Endothelial cell of umbilical vein (primary cell): ENCODE measurements at regions of chr12 and their contacts with region 1.

Region 1: DNA sequence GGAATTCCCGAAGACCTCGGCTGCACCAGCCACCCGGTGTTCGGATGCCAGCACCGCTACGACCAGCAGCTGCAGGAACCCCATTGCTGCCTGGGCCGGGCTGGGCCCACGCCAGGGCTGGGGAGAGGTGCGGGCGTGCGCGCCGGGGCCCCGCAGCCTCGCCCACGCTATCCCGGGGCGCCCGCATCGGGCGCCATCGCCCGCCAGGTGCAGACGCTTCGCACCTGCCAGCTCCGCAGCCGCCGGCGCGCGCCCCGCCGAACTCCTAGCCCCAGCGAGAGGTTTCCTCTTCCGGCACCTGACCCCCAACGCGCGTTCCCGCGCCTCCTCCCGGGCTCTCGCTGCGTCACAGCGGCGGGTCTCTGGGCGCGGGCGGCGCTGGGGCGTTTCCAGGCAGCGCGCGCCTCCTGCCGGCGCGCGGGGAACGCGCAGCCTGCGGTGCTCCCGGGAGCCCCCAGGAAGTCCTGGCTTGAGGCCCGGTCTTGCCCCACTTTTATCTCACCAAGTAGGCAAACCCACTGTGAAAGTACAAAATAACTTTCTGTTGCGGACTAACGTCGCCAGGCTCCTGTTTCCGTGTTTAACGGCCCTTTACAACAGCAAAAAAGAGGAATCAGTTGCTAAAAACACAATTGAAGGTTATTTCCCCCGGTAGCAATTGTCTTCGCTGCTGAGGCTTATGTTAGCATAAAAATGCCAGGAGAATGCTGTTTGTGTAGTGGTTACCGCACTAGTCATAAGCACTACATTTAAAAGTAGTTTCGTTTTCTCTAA is at the start of gene TM7SF3:
- DNase-seq: peak; percentile 83
- H3K4me3 ChIP-seq: peak within 1 kb of the TSS; percentile 48 to 89 (median 65)
- H3K27ac ChIP-seq: peak within 1 kb of the TSS; percentile 81
- H3K4me1 ChIP-seq: peaks cover 11% of the 10 kb centered on the region
- H3K27me3 ChIP-seq: no peaks in the 10 kb centered on the region
- CTCF ChIP-seq: peak; percentile 87 to 99
- POLR2A ChIP-seq: peak; percentile 55
- total RNA-seq, gene TM7SF3: 51.0 and 54.8 TPM in 2 replicates

Region 2: DNA sequence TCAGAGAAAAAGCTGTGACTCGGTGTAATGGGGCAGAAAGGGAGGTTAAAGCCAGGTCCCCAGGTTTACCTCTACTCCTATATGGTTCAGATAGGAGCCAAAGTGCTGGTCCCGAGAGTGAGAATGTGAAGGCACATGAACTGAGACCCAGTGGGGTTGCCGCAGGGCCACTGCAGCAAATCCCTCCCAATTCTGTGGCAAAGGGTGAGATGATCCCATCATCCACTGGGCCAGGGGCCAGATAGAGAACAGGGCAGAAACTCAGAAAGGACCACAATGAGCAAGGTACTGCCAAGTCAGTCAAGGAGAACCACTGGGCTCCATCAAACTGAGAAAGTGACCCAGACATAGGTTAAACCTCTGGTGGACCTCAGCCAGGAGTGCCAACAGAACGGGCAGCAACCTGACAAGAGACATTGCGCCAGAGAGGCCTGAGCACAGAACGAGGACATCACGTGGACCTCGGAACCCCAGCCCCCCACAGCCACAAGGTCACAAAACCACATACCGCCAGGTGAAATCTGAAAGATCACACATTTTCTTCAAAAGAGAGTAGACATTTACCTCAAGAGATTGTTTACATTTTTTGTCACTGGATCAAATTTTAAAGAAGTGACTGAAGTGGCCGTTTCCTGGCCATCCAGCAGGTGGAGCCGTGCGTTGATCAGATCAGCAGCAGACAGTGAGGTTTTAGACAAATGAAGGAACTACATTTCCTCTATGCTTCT is 160.8 kb before region 1 on chr12:
- CTCF ChIA-PET with region 1: interaction called, 5 read pairs
- POLR2A ChIA-PET with region 1: no interaction called
- dilution Hi-C with region 1: no loop called
- intact Hi-C with region 1: loop called (anchors 1 kb)
- DNase-seq: peak; percentile 74
- H3K4me3 ChIP-seq: no peak overlapping the region
- H3K27ac ChIP-seq: no peak overlapping the region
- H3K4me1 ChIP-seq: peaks cover 32% of the 10 kb centered on the region
- H3K27me3 ChIP-seq: no peaks in the 10 kb centered on the region
- CTCF ChIP-seq: peak; percentile 77 to 94
- POLR2A ChIP-seq: no peak

Region 3: GRCh38 chr12:26937875-26938700 is 76.2 kb before region 1 on chr12 and contains the starts of genes FGFR1OP2 and INTS13:
- CTCF ChIA-PET with region 1: interaction called, 4 read pairs
- POLR2A ChIA-PET with region 1: no interaction called
- dilution Hi-C with region 1: no loop called
- intact Hi-C with region 1: loop called (anchors 1 kb)
- DNase-seq: peak; percentile 98
- H3K4me3 ChIP-seq: peak within 1 kb of the TSS; percentile 49 to 94 (median 91)
- H3K27ac ChIP-seq: peak within 1 kb of the TSS; percentile 82
- H3K4me1 ChIP-seq: peaks cover 49% of the 10 kb centered on the region
- H3K27me3 ChIP-seq: no peaks in the 10 kb centered on the region
- CTCF ChIP-seq: no peak
- POLR2A ChIP-seq: peak; percentile 90
- total RNA-seq, gene FGFR1OP2: 47.3 and 49.3 TPM in 2 replicates
- total RNA-seq, gene INTS13: 25.5 and 35.9 TPM in 2 replicates

Region 4: DNA sequence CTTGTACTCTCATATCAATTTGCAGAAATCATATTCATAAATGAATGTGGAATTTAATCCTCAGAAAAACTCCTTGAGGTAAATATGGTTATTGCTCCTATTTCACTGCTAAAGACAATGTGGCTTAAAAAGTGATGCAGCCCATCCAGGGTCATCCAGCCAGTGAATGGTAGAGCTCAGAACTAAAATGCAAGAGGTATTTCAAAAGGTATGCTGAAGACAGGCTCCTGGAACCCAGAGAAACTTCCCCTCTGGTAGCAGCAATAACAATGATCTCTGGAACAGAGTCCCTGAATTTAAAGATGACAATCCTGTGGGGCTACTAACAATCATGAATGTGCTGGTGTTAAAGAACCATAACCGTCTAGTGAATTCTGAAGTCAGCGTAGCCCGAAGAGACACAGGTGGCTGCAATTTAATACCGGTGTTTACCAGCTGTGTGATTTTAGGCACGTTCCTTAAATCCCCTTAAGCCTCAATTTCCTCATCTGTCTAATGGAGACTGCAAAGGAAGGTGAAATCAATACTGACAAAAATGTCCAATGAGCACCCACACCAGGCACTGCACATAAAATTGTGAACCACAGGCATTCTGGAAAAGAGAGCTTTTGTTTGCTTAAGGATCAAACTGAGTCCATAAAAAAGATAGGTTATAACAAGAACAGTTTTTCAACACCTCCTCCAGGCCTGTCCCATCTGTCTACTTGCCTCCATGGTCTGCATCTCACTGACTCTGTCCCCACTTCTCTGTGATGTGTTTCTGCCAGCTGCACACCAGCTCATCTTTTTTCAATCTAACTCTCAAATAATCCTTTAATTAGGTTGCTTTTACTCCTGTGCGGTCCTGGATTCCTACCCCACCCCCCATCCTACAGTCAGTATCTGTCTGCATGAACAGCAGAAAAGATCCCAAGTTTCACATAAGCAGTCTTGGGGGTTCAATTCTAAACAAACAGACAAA is 10.6 kb before region 1 on chr12:
- CTCF ChIA-PET with region 1: interaction called, 25 read pairs
- POLR2A ChIA-PET with region 1: no interaction called
- dilution Hi-C with region 1: no loop called
- intact Hi-C with region 1: no loop called
- DNase-seq: no peak
- H3K4me3 ChIP-seq: no peak overlapping the region
- H3K27ac ChIP-seq: no peak overlapping the region
- H3K4me1 ChIP-seq: peaks cover 20% of the 10 kb centered on the region
- H3K27me3 ChIP-seq: no peaks in the 10 kb centered on the region
- CTCF ChIP-seq: no peak
- POLR2A ChIP-seq: no peak

Region 5: DNA sequence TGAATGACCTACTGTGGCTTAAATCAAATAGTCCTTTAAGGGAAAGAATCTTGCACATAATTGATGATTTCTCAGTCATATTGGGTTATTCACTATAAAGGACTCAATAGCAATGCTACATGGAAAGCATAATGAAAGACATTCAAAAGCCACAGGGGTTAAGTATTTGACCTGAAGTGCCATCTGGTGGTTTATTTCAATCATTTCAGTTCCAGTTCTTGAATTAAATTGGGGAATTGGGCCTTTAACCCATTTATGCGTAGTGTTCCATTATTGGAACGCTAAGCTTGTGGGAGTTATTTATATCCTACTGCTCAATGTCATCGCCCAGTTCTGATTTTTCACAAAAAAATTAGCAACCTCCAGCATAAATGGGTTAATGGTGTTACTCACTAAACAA is 109.4 kb after region 1 on chr12:
- CTCF ChIA-PET with region 1: interaction called, 26 read pairs
- POLR2A ChIA-PET with region 1: no interaction called
- dilution Hi-C with region 1: no loop called
- intact Hi-C with region 1: loop called (anchors 5 kb)
- DNase-seq: peak; percentile 14
- H3K4me3 ChIP-seq: no peak overlapping the region
- H3K27ac ChIP-seq: no peak overlapping the region
- H3K4me1 ChIP-seq: no peaks in the 10 kb centered on the region
- H3K27me3 ChIP-seq: no peaks in the 10 kb centered on the region
- CTCF ChIP-seq: peak in 1 of 2 donors; percentile 1
- POLR2A ChIP-seq: no peak

Region 6: DNA sequence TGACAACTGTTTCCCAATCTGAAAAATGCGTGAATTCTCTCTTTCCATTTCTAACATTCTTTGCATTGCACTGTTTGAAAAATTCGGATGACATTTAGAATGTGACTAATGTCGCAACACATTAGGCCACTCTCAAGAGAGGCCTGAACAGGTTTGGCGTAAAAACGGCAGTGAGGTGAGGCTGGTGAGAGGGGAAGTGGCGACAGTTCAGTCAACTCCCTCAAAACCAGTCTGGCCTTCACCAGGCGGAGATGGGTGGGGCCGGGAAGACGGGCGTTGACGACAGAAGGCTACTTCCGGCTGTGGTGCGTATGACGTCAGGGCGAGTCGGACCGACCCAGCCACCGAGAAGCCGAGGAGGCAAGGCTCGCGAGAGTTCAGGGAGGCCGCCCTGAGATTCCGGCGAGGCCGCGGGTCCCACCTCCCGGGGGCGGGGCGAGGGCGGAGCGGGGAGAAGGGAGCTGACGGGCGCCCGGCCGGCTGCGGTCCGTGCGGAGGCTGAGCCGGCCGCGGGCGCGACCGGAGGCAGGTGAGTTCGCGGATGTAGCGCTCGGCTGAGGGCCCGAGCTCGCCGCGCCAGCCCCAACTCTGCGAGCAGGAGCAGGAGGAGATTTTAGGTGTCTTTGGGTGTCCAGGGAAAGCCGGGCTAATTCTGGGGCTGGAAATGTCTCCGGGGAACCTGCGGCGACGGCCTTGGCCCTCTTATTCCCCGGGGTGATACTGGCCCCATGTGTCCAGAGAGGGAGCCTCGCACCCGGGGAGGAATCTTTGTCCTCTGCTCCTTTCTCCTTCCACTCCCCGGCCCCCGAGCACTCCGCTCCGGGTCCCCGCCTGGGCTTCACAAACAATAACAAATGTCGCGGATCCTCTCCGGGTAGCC is 229.8 kb after region 1 on chr12 and contains the start of gene STK38L:
- CTCF ChIA-PET with region 1: interaction called, 10 read pairs
- POLR2A ChIA-PET with region 1: no interaction called
- dilution Hi-C with region 1: no loop called
- intact Hi-C with region 1: loop called (anchors 1 kb)
- DNase-seq: peak; percentile 92
- H3K4me3 ChIP-seq: peak within 1 kb of the TSS; percentile 80 to 87 (median 86)
- H3K27ac ChIP-seq: peak within 1 kb of the TSS; percentile 76
- H3K4me1 ChIP-seq: peaks cover 14% of the 10 kb centered on the region
- H3K27me3 ChIP-seq: no peaks in the 10 kb centered on the region
- CTCF ChIP-seq: peak in 1 of 2 donors; percentile 10
- POLR2A ChIP-seq: peak; percentile 97
- total RNA-seq, gene STK38L: 58.4 and 60.0 TPM in 2 replicates

Region 7: DNA sequence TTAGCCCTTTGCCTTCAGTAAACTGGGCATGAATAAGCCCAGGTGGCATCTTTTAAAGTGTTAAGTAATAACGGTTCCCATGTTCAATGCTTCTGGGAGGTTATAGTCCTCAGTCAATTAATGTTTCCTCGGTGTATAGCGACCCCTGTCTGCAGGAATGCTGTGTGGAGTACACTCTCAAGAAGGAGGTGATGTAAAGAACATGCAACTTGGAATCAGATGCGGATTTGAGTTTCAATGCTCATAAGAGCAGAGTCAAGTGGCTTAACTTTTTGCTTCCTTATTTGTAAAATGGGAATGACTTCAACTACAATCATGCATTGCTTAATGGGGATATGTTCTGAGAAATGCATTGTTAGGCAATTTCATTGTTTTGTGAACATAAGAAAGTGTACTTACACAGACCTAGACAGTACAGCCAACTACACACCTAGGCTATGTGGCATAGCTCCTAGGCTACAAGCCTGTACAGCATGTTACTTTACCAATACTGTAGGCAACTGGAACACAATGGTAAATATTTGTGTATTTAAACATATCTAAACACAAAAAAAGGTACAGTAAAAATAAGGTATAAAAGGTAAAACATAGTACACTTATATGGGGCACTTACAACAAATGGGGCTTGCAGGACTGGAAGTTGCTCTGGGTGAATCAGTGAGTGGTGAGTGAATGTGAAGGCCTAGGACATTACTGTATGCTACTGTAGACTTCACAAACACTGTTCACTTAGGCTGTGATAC is 689.6 kb after region 1 on chr12:
- CTCF ChIA-PET with region 1: interaction called, 26 read pairs
- POLR2A ChIA-PET with region 1: no interaction called
- dilution Hi-C with region 1: no loop called
- intact Hi-C with region 1: loop called (anchors 2 kb)
- DNase-seq: peak; percentile 87
- H3K4me3 ChIP-seq: no peak overlapping the region
- H3K27ac ChIP-seq: no peak overlapping the region
- H3K4me1 ChIP-seq: no peaks in the 10 kb centered on the region
- H3K27me3 ChIP-seq: no peaks in the 10 kb centered on the region
- CTCF ChIP-seq: peak; percentile 78 to 79
- POLR2A ChIP-seq: no peak